ENCODE measurements at regions of chr2 and their contacts with region 1.

Region 1: GRCh38 chr2:213284105-213285090 is at the start of gene SPAG16:
- DNase-seq: peak; percentile 97
- H3K4me3 ChIP-seq: peak within 1 kb of the TSS; percentile 62 to 90 (median 76)
- H3K27ac ChIP-seq: peak within 1 kb of the TSS; percentile 77 to 85 (median 78)
- H3K4me1 ChIP-seq: peaks cover 4 to 27% (median 15%) of the 10 kb centered on the region in 4 donors
- H3K27me3 ChIP-seq: no peaks in the 10 kb centered on the region
- CTCF ChIP-seq: no peak
- EP300 ChIP-seq: no peak
- POLR2A ChIP-seq: peak; percentile 56
- total RNA-seq, gene SPAG16: 1.2 to 30.8 (median 16.2) TPM

Region 2: GRCh38 chr2:212777020-212777491 is 507.3 kb before region 1 on chr2:
- in situ Hi-C with region 1: no loop called
- intact Hi-C with region 1: no loop called
- DNase-seq: no peak
- H3K4me3 ChIP-seq: no peak overlapping the region
- H3K27ac ChIP-seq: no peak overlapping the region
- H3K4me1 ChIP-seq: no peaks in the 10 kb centered on the region
- H3K27me3 ChIP-seq: no peaks in the 10 kb centered on the region
- CTCF ChIP-seq: peak; percentile 52 to 65 (median 54)
- EP300 ChIP-seq: no peak
- POLR2A ChIP-seq: no peak

Region 3: DNA sequence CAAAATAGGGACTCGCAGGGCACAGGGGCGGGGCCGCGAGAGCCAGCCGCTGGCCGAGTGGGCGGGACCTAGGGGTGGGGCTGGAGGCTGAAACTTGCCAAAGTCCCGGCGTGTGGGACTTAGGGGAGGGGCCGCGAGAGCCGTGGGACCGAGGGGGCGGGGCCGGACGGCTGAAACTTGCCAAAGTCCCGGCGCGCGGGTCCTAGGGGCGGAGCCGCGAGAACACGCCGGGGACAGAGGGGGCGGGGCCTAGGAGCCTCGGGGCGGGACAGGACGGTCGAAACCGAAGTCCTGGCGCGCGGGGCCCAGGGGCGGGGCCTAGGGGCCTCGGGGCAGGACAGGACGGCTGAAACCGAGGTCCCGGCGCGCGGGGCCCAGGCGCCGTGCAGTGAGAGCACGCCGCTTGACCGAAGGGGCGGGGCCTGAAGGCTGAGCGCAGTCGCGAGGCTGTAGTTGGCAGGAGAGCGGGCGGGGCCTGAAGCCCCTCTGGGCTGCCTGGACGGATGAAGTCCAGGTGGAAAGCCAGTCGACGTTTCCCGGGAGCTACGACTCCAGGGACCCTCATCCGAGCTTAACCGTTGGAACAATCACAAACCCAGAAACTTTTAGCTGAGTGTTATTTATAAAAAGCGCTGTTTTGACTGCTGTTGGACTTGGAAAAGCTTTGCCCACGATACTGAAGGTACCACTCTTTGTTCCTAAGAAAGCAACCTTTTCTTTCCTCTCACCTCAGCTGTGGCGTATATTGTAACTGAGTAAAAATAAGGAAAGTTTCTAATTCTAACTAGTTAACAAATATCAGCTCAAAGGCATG is 1525.6 kb after region 1 on chr2:
- in situ Hi-C with region 1: loop called in 1 of 4 experiments (anchors 25 kb)
- intact Hi-C with region 1: no loop called
- DNase-seq: peak; percentile 100
- H3K4me3 ChIP-seq: peak overlapping the region; percentile 20 to 89 (median 79)
- H3K27ac ChIP-seq: peak overlapping the region; percentile 88 to 98 (median 96)
- H3K4me1 ChIP-seq: peaks cover 0 to 17% (median 12%) of the 10 kb centered on the region in 4 donors
- H3K27me3 ChIP-seq: no peaks in the 10 kb centered on the region
- CTCF ChIP-seq: no peak
- EP300 ChIP-seq: no peak
- POLR2A ChIP-seq: no peak

Measured in transverse colon (tissue), 4 donors.